WTC11 (cell line): ENCODE measurements at regions of chr2 and their contacts with region 1.

Region 1: DNA sequence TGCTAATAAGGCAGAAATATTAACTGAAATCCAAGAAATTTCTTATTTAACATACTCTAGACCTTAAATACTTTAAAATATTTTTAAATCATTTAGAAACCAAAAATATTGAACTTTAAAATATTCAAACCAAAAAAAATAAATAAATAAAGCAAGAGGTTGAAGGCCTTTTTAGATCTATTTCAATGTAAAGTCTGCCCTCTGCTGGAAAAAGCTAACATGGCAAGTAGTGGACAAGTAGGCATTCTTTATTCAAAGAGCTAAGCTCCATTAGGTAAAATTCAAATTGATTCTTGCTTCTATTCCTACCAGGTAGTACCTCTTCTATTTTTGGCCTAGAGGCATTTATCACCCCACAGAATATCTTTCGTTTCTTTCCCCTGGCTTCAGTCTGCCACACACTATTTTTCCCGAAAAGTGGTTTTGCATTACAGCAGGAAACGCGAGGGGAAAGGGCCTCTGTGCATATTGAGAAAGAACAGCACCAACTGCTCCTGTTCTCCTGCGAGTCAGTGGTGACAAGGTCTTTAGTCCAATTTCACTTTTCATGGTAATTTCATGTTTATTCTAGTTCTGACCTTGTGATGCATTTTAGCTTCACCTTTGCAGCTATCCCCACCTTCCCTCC is 20.4 kb downstream of the IFIH1 start:
- DNase-seq: peak; percentile 33
- ATAC-seq: peak; percentile 64
- H3K4me3 Mint-ChIP-seq: no peak overlapping the region
- H3K27ac Mint-ChIP-seq: no peak overlapping the region
- H3K4me1 Mint-ChIP-seq: no peaks in the 10 kb centered on the region
- H3K27me3 Mint-ChIP-seq: no peaks in the 10 kb centered on the region
- CTCF ChIP-seq: peak; percentile 61

Region 2: DNA sequence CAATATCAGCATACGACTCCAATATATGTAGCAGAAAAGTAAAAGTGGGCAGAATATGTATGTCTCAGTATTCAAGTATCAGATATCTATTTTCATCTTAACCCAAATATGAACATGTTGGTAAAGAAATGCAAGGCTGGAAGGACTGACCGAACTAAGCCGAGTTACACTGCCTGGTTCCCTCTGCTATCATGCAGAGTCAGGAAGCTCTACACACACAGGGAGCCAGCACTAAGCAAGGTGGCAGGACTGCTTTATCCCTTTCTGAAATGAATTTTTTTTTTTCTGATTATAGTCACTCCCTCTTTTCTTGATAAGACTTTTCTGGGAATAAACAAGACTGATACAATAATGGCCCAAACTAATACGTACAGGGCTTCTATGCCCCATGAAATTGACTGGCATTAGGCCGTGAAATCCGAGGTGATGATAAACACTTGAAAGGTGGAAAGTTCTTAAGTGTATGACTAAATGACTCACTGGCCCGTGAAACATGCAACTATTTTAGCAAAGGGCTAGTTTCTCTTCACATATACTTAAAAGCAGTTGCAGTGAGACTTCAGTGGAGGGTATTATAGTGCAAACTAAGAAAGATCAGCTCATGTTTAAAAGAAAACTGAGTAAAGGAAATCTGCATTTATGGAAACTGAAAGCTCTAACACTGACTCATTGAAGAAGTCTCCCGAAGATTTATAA is 238.9 kb before region 1 on chr2:
- CTCF ChIA-PET with region 1: no interaction called
- POLR2A ChIA-PET with region 1: no interaction called
- DNase-seq: no peak
- ATAC-seq: peak; percentile 48; the same call in 1 of the 2 replicates
- H3K4me3 Mint-ChIP-seq: no peak overlapping the region
- H3K27ac Mint-ChIP-seq: peak overlapping the region; percentile 44; the same call in 1 of the 2 replicates
- H3K4me1 Mint-ChIP-seq: peaks cover 13% of the 10 kb centered on the region
- H3K27me3 Mint-ChIP-seq: no peaks in the 10 kb centered on the region; the same call in 1 of the 2 replicates
- CTCF ChIP-seq: no peak

Region 3: GRCh38 chr2:162153608-162154224 is 144.3 kb before region 1 on chr2:
- CTCF ChIA-PET with region 1: interaction called, 29 read pairs
- POLR2A ChIA-PET with region 1: no interaction called
- DNase-seq: peak; percentile 65
- ATAC-seq: peak; percentile 96
- H3K4me3 Mint-ChIP-seq: no peak overlapping the region
- H3K27ac Mint-ChIP-seq: no peak overlapping the region
- H3K4me1 Mint-ChIP-seq: peaks cover 10% of the 10 kb centered on the region
- H3K27me3 Mint-ChIP-seq: no peaks in the 10 kb centered on the region
- CTCF ChIP-seq: peak; percentile 64

Region 4: DNA sequence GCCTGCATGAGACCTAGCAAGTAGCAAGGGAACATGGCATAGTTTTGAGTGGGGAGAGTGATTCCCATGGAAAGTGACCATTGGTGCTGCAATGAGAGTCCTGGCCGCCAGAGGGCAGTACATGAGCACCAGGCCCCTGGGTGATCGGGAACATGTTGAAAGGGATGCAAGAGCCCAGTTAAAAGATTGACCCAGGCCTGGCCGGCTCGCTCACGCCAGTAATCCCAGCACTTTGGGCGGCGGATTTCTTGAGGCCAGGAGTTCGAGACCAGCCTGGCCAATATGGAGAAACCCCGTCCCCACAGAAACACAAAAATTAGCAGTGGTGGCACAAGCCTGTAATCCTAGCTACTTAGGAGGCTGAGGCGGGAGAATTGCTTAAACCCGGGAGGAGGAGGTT is 77.0 kb before region 1 on chr2:
- CTCF ChIA-PET with region 1: interaction called, 107 read pairs
- POLR2A ChIA-PET with region 1: no interaction called
- DNase-seq: peak; percentile 90
- ATAC-seq: peak; percentile 98
- H3K4me3 Mint-ChIP-seq: no peak overlapping the region
- H3K27ac Mint-ChIP-seq: peak overlapping the region; percentile 73; the same call in 1 of the 2 replicates
- H3K4me1 Mint-ChIP-seq: peaks cover 18% of the 10 kb centered on the region
- H3K27me3 Mint-ChIP-seq: no peaks in the 10 kb centered on the region
- CTCF ChIP-seq: peak; percentile 83

Region 5: GRCh38 chr2:162285816-162286215 is 12.2 kb before region 1 on chr2:
- CTCF ChIA-PET with region 1: interaction called, 24 read pairs
- POLR2A ChIA-PET with region 1: no interaction called
- DNase-seq: no peak
- ATAC-seq: no peak
- H3K4me3 Mint-ChIP-seq: no peak overlapping the region
- H3K27ac Mint-ChIP-seq: no peak overlapping the region
- H3K4me1 Mint-ChIP-seq: no peaks in the 10 kb centered on the region
- H3K27me3 Mint-ChIP-seq: no peaks in the 10 kb centered on the region
- CTCF ChIP-seq: no peak